B cell (primary cell): ENCODE measurements at regions of chr12 and their contacts with region 1.

Region 1: DNA sequence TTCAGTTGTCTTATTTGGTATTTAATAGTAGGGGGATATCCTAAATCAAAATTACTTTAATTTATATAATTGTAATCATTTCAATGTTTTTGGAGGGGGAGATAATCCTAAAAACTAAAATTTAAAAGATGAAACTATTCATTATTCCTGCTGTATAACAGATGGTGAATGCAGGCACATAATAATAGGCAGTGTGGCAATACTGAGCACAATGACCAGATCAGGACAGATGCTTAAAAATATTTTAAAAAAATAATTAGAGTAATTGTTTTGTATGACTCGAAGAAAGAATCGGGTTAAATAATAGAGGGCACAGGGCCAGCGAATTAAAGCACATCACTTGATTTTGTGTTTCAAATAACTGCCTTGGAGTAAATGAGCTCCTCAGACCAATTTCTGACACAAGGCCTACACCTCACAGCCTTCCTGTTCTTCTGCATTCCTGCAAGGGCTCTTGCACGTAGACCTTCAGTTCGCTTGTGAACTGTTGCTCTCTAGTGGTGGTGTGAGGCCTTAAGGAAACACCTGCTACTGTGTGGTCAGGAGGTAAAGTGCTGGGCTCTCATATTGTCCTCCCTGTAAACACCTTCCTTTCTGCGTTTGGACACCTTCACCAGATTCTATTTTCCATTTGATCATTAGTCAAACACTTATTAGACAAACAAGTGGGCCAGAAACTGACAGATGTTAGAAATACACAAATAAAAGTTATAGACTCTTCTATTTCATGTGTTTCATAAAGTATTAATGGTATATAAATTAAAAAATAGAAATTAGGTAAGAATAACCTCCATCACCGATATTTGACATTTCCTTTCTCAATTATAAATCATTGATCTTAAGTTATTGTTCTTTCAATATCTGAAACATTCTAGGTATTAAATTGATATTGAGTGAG is 29.3 kb upstream of the KLRF1 start:
- DNase-seq: peak; percentile 85
- ATAC-seq: peak; percentile 95
- H3K4me3 ChIP-seq: no peak overlapping the region
- H3K4me3 Mint-ChIP-seq: no peak overlapping the region
- H3K27ac ChIP-seq: no peak overlapping the region
- H3K27ac Mint-ChIP-seq: no peak overlapping the region
- H3K4me1 ChIP-seq: peaks cover 25 to 28% of the 10 kb centered on the region in 2 donors
- H3K4me1 Mint-ChIP-seq: peaks cover 34% of the 10 kb centered on the region
- H3K27me3 ChIP-seq: no peaks in the 10 kb centered on the region
- H3K27me3 Mint-ChIP-seq: no peaks in the 10 kb centered on the region
- CTCF ChIP-seq: peak; percentile 81

Region 2: DNA sequence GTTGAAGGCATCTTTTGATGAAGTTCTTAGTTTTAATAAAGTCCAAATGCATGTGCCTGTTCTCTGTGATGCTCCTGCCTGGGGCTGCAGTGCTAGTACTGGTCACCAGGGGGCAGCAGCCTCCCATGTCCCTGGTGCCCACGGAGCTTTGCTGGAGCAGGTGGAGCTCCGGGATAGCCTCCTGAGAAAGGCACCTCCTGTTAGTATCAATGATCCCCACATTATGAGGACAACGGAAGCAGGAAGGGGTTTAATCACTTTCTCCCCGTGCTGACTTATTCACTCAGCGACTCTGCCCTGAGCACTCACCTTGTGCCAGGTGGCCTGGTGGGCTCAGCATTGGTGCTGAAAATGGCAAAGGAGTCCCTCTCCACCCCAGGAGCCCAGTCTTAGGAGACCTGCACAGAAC is 466.7 kb before region 1 on chr12:
- CTCF ChIA-PET with region 1: interaction called, 12 read pairs
- POLR2A ChIA-PET with region 1: no interaction called
- intact Hi-C with region 1: loop called (anchors 1 kb)
- DNase-seq: peak; percentile 74
- ATAC-seq: peak; percentile 84
- H3K4me3 ChIP-seq: no peak overlapping the region
- H3K4me3 Mint-ChIP-seq: no peak overlapping the region
- H3K27ac ChIP-seq: no peak overlapping the region
- H3K27ac Mint-ChIP-seq: no peak overlapping the region
- H3K4me1 ChIP-seq: peaks cover 0 to 12% of the 10 kb centered on the region in 2 donors
- H3K4me1 Mint-ChIP-seq: peaks cover 7% of the 10 kb centered on the region
- H3K27me3 ChIP-seq: peaks cover 0 to 3% (median 0%) of the 10 kb centered on the region in 4 experiments
- H3K27me3 Mint-ChIP-seq: no peaks in the 10 kb centered on the region
- CTCF ChIP-seq: peak; percentile 98

Region 3: DNA sequence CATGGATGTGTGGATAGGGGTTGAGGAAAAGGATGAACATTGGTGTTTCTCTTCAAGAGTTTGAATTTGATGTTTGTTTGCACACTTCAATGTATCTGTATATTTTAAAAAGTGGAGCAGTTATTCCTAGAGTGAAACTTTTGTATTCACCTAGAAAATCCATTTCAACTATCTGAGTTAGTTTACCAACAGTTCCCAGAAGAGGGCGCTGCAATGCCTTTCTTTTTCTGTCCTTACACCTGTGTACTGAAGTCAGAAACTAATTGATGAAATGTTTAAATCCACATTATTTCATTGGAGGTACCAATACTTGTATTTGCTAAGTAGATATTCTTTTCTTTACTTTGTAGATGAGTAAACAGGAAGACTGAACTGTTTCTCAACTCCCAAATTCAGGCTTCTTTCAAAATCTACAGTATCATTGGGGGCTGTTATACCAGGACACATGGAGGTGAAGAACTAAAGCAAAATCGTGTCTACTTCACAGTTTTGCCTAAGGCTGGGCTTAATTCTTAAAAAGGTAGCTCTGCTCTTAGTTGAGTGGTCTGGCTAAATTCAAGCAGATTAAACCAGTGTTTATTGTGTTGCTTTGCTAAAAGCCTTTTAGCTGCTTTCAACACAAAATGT is 163.7 kb before region 1 on chr12:
- CTCF ChIA-PET with region 1: interaction called, 22 read pairs
- POLR2A ChIA-PET with region 1: interaction called, 5 read pairs
- intact Hi-C with region 1: loop called (anchors 1 kb)
- DNase-seq: peak; percentile 86
- ATAC-seq: peak; percentile 75
- H3K4me3 ChIP-seq: no peak overlapping the region
- H3K4me3 Mint-ChIP-seq: peak overlapping the region; percentile 72
- H3K27ac ChIP-seq: peak overlapping the region; percentile 1 to 82
- H3K27ac Mint-ChIP-seq: peak overlapping the region; percentile 83
- H3K4me1 ChIP-seq: peaks cover 48 to 53% of the 10 kb centered on the region in 2 donors
- H3K4me1 Mint-ChIP-seq: peaks cover 59% of the 10 kb centered on the region
- H3K27me3 ChIP-seq: no peaks in the 10 kb centered on the region
- H3K27me3 Mint-ChIP-seq: no peaks in the 10 kb centered on the region
- CTCF ChIP-seq: peak; percentile 92

Region 4: GRCh38 chr12:9760699-9761418 is 37.1 kb before region 1 on chr12 and contains the start of gene CD69:
- CTCF ChIA-PET with region 1: interaction called, 629 read pairs
- POLR2A ChIA-PET with region 1: interaction called, 4 read pairs
- intact Hi-C with region 1: loop called (anchors 1 kb)
- DNase-seq: peak; percentile 95
- ATAC-seq: peak; percentile 59
- H3K4me3 ChIP-seq: peak within 1 kb of the TSS; percentile 46 to 100 (median 75)
- H3K4me3 Mint-ChIP-seq: peak within 1 kb of the TSS; percentile 96
- H3K27ac ChIP-seq: peak within 1 kb of the TSS; percentile 89 to 93
- H3K27ac Mint-ChIP-seq: peak within 1 kb of the TSS; percentile 99
- H3K4me1 ChIP-seq: peaks cover 58 to 63% of the 10 kb centered on the region in 2 donors
- H3K4me1 Mint-ChIP-seq: peaks cover 69% of the 10 kb centered on the region
- H3K27me3 ChIP-seq: no peaks in the 10 kb centered on the region
- H3K27me3 Mint-ChIP-seq: no peaks in the 10 kb centered on the region
- CTCF ChIP-seq: no peak
- total RNA-seq, gene CD69: 44.8 and 45.1 TPM in 2 replicates

Region 5: DNA sequence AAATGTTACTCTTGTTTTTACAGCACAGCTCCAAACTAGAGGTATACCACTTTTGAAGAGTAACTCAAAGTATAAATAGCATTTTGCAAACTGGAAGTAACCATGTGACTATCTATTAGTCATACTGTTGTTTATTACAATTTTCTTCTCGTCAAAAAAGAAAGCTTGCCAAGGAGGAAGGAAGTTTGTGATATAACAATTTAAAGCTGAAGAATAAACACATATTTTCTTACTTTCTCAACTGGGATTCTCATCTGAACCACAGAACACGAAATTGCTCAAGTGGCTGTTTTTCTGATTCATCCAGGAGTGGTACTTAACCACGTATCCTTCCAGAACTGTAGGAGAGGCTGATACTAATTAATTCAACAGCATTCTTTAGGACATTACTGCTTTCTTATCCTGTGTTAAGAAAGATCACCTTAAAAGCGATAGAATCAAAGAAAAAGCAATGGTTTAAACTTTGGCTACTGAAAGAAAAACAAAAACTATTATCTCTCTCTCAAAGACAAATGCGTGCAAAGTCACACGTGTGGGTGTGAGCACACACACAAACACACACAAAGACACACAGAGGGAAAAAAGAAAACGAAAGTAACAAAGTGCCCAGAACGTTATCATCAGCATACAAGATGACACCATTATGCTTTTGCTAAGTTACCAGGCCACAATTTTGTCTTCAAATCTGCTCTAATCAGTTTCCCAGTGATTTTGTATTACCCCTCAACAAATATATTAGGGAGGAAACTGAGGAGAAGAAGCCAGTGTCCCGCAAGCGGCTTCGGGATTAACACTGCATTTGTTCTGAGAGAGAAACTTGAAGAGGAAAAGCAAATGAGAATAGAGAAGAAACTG is 71.6 kb after region 1 on chr12 and contains the start of gene CLEC2B:
- CTCF ChIA-PET with region 1: no interaction called
- POLR2A ChIA-PET with region 1: no interaction called
- intact Hi-C with region 1: loop called (anchors 1 kb)
- DNase-seq: peak; percentile 76
- ATAC-seq: peak; percentile 66
- H3K4me3 ChIP-seq: peak within 1 kb of the TSS; percentile 51 to 97 (median 66)
- H3K4me3 Mint-ChIP-seq: peak within 1 kb of the TSS; percentile 92
- H3K27ac ChIP-seq: peak within 1 kb of the TSS; percentile 89 to 90
- H3K27ac Mint-ChIP-seq: peak within 1 kb of the TSS; percentile 99
- H3K4me1 ChIP-seq: peaks cover 14 to 18% of the 10 kb centered on the region in 2 donors
- H3K4me1 Mint-ChIP-seq: peaks cover 41% of the 10 kb centered on the region
- H3K27me3 ChIP-seq: no peaks in the 10 kb centered on the region
- H3K27me3 Mint-ChIP-seq: no peaks in the 10 kb centered on the region
- CTCF ChIP-seq: no peak
- total RNA-seq, gene CLEC2B: 30.5 and 31.6 TPM in 2 replicates